H1 (cell line): ENCODE measurements at regions of chr5 and their contacts with region 1.

Region 1: DNA sequence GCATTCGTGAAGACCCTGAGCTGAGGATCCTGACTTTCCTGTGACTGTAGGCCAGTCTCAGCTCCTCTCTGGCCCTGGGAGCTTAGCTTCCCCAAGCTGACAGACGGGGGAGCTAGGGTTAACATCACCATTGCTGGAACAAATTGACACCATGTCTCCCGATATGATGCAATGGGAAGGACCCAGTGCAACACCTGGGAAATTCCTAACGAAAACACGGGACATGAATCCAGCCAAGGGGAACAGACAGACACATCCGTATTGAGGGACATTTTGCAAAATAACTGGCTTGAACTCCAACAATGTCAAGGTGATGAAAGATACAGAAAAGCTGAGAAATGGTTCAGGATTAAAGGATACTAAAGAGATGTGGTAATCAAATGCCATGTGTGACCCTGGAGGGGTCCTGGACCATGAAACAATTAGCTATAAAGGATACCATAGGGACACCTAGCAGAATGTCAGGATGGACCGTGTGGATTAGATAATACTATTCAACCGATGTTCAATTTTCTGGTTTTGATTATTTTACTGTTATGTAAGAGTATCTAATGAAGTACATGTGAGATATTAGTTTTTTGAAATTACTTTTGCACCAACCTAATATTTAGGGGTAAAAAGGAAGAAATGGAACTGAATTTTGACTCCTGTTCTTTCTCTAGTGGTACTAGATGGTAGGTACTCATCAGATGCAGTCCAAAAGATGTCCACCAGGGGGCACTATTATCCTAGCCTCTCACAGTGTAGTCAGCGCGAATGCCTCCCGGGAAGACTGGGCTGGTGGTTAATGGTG is 52.7 kb downstream of the NDST1 start:
- DNase-seq: peak; percentile 56 to 96
- H3K4me3 ChIP-seq: peak overlapping the region in 1 of 4 experiments; percentile 23; a peak in 1 of 8 replicates
- H3K27ac ChIP-seq: 0 out of 2 replicates have a peak overlapping the region, but pooled peaks have one; percentile 2
- H3K4me1 ChIP-seq: peaks cover 2 to 9% (median 4%) of the 10 kb centered on the region in 4 experiments
- H3K27me3 ChIP-seq: no peaks in the 10 kb centered on the region
- CTCF ChIP-seq: peak; percentile 50 to 91 (median 82)
- EP300 ChIP-seq: peak in 1 of 2 experiments; percentile 20; a peak in 1 of 3 replicates
- POLR2A ChIP-seq: no peak
- RAD21 ChIP-seq: peak; percentile 93 to 94

Region 2: GRCh38 chr5:150377964-150378694 is 182.5 kb before region 1 on chr5:
- CTCF ChIA-PET with region 1: no interaction called
- POLR2A ChIA-PET with region 1: no interaction called
- DNase-seq: no peak
- H3K4me3 ChIP-seq: no peak overlapping the region
- H3K27ac ChIP-seq: no peak overlapping the region
- H3K4me1 ChIP-seq: no peaks in the 10 kb centered on the region
- H3K27me3 ChIP-seq: no peaks in the 10 kb centered on the region
- CTCF ChIP-seq: no peak
- EP300 ChIP-seq: no peak
- POLR2A ChIP-seq: no peak
- RAD21 ChIP-seq: no peak

Region 3: DNA sequence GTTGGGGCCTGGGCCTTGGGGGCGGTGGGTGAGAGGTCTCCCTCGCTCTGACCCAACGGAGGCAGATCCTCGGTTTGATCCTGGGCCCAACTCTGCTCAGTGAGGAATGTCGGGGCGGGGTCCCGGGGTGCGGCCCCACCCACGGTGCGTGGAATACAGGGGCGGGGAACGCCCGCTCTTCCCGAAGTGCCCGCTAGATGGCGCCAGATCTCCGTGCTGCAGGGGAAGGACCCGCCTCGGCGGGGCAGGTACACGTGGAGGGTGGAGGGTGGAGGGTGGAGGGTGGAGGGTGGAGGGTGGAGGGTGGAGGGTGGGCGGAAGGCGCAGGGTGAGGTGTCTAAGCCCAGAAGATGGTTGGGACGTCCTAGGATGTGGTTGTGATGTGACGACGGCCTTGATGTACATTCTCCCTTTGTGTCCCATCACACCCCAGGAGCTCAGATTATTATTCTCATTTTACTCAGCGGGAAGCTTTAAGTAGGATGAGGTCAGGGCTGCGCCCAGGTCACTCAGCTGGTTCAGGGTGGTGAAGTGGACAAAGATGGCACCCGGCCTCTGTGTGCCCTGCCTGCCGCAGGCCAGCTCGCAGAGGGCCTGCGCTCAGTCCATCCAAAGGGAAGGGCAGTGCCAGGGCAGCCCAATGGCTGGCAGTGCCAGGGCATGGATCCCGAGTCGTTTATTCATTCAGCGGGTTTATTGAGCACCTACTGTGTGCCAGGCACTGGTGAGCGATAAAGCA is 101.6 kb before region 1 on chr5:
- CTCF ChIA-PET with region 1: interaction called, 99 read pairs
- POLR2A ChIA-PET with region 1: interaction called, 4 read pairs
- DNase-seq: peak in 1 of 2 experiments; percentile 99
- H3K4me3 ChIP-seq: peak overlapping the region in 1 of 4 experiments; percentile 47; a peak in 2 of 8 replicates
- H3K27ac ChIP-seq: no peak overlapping the region
- H3K4me1 ChIP-seq: peaks cover 4 to 20% (median 9%) of the 10 kb centered on the region in 4 experiments
- H3K27me3 ChIP-seq: no peaks in the 10 kb centered on the region
- CTCF ChIP-seq: peak; percentile 69 to 92 (median 89)
- EP300 ChIP-seq: 0 out of 3 replicates have a peak, but pooled peaks of 1 of the 2 experiments have one; percentile 3
- POLR2A ChIP-seq: no peak
- RAD21 ChIP-seq: peak; percentile 89 to 91

Region 4: DNA sequence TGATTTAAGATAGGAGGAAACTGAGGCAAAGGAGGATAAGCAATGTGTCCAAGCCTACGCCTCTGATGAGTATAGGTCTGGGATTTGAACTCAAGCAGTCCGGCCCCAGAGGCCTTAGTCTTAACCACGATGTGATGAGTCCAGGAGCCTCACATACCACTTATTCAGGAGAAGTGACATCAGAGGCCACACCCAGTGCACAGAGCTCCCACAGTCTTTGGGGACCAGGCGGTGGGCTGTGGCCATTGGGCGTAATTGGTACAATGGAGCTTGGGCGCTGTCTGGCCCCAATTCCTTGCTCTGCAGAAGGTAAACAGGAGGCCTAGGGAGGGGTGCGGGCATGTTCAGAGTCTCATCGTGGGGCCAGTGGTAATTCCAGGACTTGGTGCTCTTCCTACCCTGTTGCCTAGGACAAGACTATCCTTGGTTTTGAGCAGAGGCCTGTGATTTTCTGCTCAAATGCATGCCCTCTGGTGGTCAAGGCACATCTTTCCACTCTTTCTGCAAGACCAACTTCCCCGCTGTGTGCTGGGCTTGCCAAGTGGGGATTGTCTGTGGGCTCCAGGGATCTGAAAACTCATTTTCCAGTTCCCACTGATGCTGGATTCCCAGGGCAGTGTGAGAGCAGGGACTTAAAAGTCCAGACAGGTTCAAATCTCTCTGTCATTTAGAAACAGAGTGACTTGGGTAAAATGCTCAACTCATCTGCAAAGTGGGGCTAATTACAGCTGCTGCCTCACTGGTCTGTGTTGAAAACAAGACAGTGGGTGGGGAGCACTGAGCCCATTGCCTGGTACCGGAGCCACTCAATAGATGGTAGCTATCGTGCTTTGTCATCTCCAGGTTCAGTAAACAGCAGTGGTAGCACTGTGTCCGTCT is 36.9 kb before region 1 on chr5:
- CTCF ChIA-PET with region 1: interaction called, 22 read pairs
- POLR2A ChIA-PET with region 1: no interaction called
- DNase-seq: no peak
- H3K4me3 ChIP-seq: no peak overlapping the region
- H3K27ac ChIP-seq: no peak overlapping the region
- H3K4me1 ChIP-seq: peaks cover 7 to 25% (median 14%) of the 10 kb centered on the region in 4 experiments
- H3K27me3 ChIP-seq: no peaks in the 10 kb centered on the region
- CTCF ChIP-seq: peak; percentile 61 to 86 (median 71)
- EP300 ChIP-seq: no peak
- POLR2A ChIP-seq: no peak
- RAD21 ChIP-seq: peak; percentile 65 to 78

Region 5: DNA sequence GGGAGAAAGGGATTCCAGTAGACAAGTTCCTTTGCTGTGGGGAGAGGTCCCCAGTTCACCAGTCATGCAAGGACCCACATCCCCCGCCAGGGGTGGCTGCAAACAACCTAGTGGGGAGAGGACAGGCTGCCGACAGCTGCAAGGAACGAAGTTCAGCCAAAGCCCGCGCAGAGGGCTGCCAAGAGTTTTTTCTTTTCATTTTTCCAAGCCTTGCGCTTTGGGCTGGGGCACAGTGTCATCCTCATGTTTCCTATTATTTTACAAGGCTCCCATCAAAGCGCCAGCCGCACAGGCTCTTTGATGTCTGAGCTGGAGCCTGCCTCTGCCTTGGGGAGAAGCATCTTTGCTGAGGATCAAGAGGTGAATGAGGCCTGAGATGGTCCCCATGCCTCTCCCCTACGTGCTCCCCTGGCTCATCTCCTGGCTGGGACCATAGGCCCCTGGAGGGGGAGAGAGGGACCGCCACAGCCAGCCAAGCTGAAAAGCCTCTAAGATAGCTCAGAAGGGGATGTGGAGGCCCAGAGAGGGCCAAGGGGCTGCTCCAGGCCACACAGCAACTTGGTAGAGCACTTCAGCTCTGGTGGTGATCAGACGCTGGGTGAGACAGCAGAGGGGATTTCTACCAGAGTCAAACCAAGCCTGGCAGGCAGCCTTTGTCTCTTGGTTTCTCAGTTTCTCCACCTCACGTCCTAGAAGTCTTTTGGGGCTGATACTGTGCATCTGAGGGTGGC is 29.4 kb after region 1 on chr5:
- CTCF ChIA-PET with region 1: interaction called, 47 read pairs
- POLR2A ChIA-PET with region 1: interaction called, 3 read pairs
- DNase-seq: peak in 1 of 2 experiments; percentile 17
- H3K4me3 ChIP-seq: no peak overlapping the region
- H3K27ac ChIP-seq: no peak overlapping the region
- H3K4me1 ChIP-seq: peaks cover 0 to 7% (median 5%) of the 10 kb centered on the region in 4 experiments; a peak in 6 of 7 replicates
- H3K27me3 ChIP-seq: no peaks in the 10 kb centered on the region
- CTCF ChIP-seq: peak; percentile 61 to 69 (median 63)
- EP300 ChIP-seq: no peak
- POLR2A ChIP-seq: no peak
- RAD21 ChIP-seq: peak; percentile 60 to 70

Region 6: GRCh38 chr5:150656191-150657132 is 95.9 kb after region 1 on chr5:
- CTCF ChIA-PET with region 1: interaction called, 303 read pairs
- POLR2A ChIA-PET with region 1: interaction called, 11 read pairs
- DNase-seq: peak in 1 of 2 experiments; percentile 94
- H3K4me3 ChIP-seq: peak overlapping the region; percentile 44 to 78 (median 46)
- H3K27ac ChIP-seq: no peak overlapping the region; the same call in 1 of the 2 replicates
- H3K4me1 ChIP-seq: peaks cover 0 to 11% (median 3%) of the 10 kb centered on the region in 4 experiments; a peak in 4 of 7 replicates
- H3K27me3 ChIP-seq: no peaks in the 10 kb centered on the region; a peak in 1 of 7 replicates
- CTCF ChIP-seq: peak in 2 of 3 experiments; percentile 57 to 82; a peak in 3 of 4 replicates
- EP300 ChIP-seq: no peak
- POLR2A ChIP-seq: peak in 1 of 2 experiments; percentile 60; a peak in 2 of 3 replicates
- RAD21 ChIP-seq: peak; percentile 71 to 79

Region 7: DNA sequence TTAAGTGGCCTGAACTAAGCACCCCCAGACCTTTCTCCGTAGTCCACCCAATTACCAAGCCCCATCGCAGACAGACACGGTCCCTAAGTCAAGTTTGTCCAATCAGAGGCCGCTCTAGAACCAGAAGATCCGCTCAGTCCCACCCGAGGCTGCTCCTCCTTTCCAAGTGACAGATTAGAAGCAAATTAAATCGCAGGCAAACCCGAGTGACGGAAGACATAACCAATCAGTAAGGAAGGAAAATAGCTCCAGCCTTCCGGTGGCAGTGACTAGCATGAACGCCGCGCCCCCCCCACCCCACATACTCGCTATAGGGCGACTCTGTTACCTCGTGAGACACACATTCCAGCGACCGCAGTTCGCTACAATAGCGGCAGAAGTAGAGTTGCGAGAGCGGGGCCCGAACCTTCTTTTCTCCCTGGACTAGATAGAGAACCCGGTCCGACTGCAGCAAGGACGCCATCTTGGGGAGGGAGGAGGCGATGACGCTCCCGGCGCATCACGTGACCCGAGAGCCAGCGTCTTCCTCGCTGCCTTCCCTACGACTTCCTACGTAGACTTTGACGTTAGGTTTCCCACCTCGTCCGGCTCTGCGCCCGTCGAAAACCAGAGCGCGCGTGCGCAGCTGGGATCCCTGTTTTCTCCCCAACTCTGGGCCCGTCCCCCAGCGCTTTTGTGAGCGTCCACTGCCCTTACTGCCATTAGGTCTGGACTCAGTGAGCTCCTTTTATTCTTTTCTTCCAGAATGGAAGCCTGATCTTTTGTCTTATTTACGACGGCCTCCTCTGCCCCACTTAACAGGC is 198.1 kb after region 1 on chr5 and contains the start of gene DCTN4:
- CTCF ChIA-PET with region 1: interaction called, 11 read pairs
- POLR2A ChIA-PET with region 1: no interaction called
- DNase-seq: peak; percentile 95
- H3K4me3 ChIP-seq: peak within 1 kb of the TSS; percentile 77 to 98 (median 81)
- H3K27ac ChIP-seq: peak within 1 kb of the TSS; percentile 92
- H3K4me1 ChIP-seq: peaks cover 0 to 2% (median 0%) of the 10 kb centered on the region in 4 experiments; a peak in 1 of 7 replicates
- H3K27me3 ChIP-seq: peaks cover 0 to 3% (median 0%) of the 10 kb centered on the region in 4 experiments; a peak in 1 of 7 replicates
- CTCF ChIP-seq: 0 out of 4 replicates have a peak, but pooled peaks of 1 of the 3 experiments have one; percentile 16
- EP300 ChIP-seq: no peak
- POLR2A ChIP-seq: peak; percentile 85 to 88
- RAD21 ChIP-seq: no peak
- total RNA-seq, gene DCTN4: 42.5 and 42.7 TPM in 2 replicates

Region 8: DNA sequence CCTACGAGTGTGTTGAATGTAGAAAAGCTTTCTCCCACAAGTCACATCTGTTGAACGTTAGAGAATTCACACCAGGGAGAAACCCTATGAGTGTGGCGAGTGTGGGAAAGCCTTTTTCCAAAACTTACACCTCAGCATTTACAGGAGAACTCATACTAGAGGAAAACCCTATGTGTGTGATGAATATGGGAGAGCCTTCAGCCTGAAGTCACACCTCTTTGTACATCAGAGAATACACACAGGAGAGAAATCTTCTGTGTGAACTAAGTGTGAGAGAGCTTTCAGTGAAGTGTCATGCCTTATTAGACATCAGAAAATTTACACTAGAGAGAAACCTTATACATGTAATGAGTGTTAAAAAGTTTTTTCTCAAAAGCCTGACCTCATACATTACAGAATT is 418.0 kb after region 1 on chr5:
- CTCF ChIA-PET with region 1: no interaction called
- POLR2A ChIA-PET with region 1: no interaction called
- DNase-seq: no peak
- H3K4me3 ChIP-seq: no peak overlapping the region
- H3K27ac ChIP-seq: no peak overlapping the region
- H3K4me1 ChIP-seq: no peaks in the 10 kb centered on the region
- H3K27me3 ChIP-seq: peaks cover 0 to 1% (median 0%) of the 10 kb centered on the region in 4 experiments; a peak in 1 of 7 replicates
- CTCF ChIP-seq: no peak
- EP300 ChIP-seq: no peak
- POLR2A ChIP-seq: no peak
- RAD21 ChIP-seq: no peak